Left ventricle myocardium superior (tissue), 1 donor: ENCODE measurements at regions of chr1 and their contacts with region 1.

Region 1: DNA sequence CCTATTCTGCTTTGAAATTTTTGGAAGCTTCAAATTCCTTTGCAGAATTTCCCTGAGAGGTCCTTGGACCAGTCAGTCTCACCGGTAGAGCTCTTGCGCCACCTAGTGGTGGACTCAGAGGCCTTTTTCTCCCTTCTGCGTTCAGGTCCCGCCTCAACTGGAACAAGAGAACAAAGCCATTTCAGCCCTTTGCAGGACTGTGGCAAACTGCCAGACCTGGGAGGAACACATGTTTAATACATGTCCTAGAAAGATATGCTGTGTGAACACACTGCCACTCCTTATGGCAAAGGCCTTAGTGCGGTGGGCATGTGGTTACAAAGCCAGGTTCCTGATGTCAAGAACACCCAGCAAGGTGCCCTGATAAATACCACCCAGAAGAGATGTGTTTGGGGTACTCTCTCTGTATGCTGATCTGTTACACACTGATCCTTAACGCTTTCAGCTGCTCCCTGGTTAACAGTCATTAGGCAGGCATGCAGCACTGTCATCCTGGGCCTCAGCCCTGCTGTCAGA is 82.2 kb upstream of the SSX2IP start:
- DNase-seq: peak; percentile 58
- ATAC-seq: peak; percentile 93

Region 2: DNA sequence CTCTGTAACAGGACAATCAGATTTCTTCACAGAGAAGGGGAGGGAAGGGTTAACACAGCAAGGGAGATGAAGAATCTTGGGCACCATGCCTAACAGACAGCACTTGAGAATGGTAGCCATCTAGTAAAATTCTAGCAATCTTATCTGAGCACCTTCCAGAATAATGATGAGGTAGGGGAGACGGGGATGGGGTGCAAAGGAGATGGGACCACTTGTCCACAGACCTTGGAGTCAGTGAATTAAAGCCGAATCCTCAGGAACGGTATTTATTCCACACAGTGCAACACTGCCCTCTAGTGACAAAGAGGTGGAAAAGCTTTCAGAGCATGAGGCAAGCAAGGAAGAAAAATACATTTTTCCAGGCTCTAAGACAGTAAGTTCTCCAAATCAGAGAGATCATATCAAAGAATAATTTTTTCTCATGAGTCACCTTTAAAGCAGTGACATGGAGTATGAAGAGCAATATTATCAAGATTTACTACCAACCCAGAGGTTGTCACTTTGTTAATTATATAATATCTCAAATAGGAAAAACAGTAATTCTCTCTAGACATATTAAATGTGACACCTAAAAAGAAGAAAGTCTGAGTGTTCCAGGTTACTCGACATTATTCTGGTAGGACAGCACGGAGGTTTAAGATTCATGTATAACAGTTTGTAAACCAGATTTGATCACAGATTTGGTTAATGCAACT is 163.8 kb after region 1 on chr1:
- intact Hi-C with region 1: loop called (anchors 10 kb)
- DNase-seq: no peak
- ATAC-seq: peak; percentile 69

Region 3: GRCh38 chr1:86104606-86105460 is 1332.3 kb after region 1 on chr1:
- intact Hi-C with region 1: no loop called
- DNase-seq: no peak
- ATAC-seq: no peak